ENCODE measurements at regions of chr7 and their contacts with region 1.

Region 1: GRCh38 chr7:35975851-35976454 is 175.1 kb downstream of the SEPTIN7 start:
- DNase-seq: peak; percentile 81
- H3K4me3 ChIP-seq: no peak overlapping the region
- H3K27ac ChIP-seq: no peak overlapping the region
- H3K4me1 ChIP-seq: no peaks in the 10 kb centered on the region
- CTCF ChIP-seq: peak; percentile 93

Region 2: DNA sequence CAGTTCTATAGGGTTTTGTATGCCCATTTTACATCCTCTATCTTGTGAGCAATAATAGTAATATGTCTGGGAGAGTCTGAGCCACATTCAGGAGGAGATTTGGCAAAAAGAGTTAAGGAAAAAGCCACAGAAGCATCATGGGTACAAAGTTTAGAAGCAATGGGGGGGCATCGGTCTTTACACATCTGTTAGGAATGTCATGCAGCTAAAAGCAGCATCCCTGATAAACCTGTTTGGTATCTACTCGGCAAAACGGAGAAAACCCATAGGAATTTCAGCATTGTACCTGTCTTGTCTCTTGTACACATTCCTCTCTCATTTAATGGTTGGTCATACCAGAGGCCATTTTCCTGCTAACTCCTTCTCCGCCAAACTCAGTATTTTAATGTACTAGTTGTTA is 268.5 kb before region 1 on chr7:
- CTCF ChIA-PET with region 1: no interaction called
- POLR2A ChIA-PET with region 1: no interaction called
- intact Hi-C with region 1: loop called (anchors 2 kb)
- DNase-seq: no peak
- H3K4me3 ChIP-seq: no peak overlapping the region
- H3K27ac ChIP-seq: no peak overlapping the region
- H3K4me1 ChIP-seq: peaks cover 21% of the 10 kb centered on the region
- CTCF ChIP-seq: no peak

Measured in OCI-LY7 (cell line).